ENCODE measurements at regions of chr2 and their contacts with region 1.

Region 1: DNA sequence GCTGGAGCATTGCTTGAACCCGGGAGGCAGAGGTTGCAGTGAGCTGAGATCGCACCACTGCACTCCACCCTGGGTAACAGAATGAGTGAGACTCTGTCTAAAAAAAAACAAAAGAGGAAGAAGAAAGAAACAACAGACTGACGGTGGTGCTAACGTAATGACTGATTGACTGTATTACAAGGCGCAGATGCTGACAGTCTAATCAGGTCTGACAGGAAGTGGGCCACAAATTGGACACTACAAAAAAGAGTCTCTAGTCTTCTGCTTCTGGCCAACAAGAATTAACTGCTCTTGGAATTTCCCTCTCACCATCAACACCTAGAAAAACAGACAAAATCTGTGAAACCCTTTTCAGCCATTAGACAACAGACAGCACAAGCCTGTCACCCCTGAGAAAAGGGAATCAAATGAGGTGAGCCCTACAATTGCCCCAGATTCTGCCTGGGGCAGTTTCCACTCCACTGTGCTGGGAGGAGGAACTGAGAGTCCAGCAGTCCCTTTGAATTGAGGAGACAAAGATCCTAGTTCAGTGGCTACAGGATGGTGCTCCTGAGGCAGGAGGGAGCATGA is 43.3 kb downstream of the SNED1 start:
- DNase-seq: no peak
- ATAC-seq: peak; percentile 75
- H3K4me3 Mint-ChIP-seq: peak overlapping the region; percentile 74
- H3K27ac Mint-ChIP-seq: peak overlapping the region; percentile 96
- H3K4me1 Mint-ChIP-seq: peaks cover 70% of the 10 kb centered on the region
- H3K27me3 Mint-ChIP-seq: no peaks in the 10 kb centered on the region
- CTCF ChIP-seq: no peak

Region 2: DNA sequence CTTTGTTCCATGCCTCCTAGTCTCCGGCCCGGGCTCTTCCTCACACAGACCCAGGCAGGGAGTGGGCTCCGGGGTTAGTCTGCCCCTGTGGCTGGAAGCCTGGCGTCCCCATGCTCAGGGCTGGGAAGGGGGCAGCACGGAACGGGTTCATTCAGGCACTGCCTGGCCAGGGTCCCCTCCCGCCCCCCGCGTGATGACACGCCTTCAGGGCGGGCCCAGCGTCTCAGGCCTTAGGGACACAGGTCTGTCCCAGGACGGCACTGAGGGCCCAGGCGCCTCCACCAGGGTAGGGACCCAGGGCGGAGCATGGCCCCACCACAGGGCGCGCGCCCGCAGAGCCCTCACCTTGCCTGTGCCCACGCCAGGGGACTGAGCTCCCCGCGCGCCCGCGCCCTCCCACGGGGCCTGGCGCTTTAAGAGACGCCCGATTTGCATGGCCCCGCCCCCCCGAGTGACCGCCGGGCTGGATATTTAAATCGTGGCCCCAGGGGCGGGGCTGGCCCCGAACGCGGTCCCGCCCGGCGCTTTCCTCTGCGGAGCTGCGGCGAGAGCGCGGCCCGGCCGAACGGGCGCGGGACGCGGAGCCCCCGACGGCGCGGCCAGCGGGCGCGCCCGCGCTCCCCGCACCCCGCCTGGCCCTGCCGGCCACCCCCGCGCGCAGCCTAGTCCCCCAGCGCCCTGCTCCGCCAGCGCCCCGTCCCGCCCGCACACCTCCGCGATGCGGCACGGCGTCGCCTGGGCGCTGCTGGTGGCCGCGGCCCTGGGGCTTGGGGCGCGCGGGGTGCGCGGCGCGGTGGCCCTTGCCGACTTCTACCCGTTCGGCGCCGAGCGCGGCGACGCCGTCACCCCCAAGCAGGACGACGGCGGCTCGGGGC is 43.3 kb before region 1 on chr2 and contains the start of gene SNED1:
- CTCF ChIA-PET with region 1: no interaction called
- POLR2A ChIA-PET with region 1: interaction called, 3 read pairs
- intact Hi-C with region 1: loop called (anchors 1 kb)
- DNase-seq: peak; percentile 67
- ATAC-seq: peak; percentile 89
- H3K4me3 Mint-ChIP-seq: peak within 1 kb of the TSS; percentile 2
- H3K27ac Mint-ChIP-seq: no peak within 1 kb of the TSS
- H3K4me1 Mint-ChIP-seq: no peaks in the 10 kb centered on the region
- H3K27me3 Mint-ChIP-seq: peaks cover 23% of the 10 kb centered on the region
- CTCF ChIP-seq: no peak
- total RNA-seq, gene SNED1: 44.7 and 59.8 TPM in 2 replicates

Region 3: GRCh38 chr2:241064008-241064801 is 22.5 kb after region 1 on chr2:
- CTCF ChIA-PET with region 1: no interaction called
- POLR2A ChIA-PET with region 1: interaction called, 4 read pairs
- intact Hi-C with region 1: loop called (anchors 2 kb)
- DNase-seq: peak; percentile 37
- ATAC-seq: peak; percentile 81
- H3K4me3 Mint-ChIP-seq: peak overlapping the region; percentile 55
- H3K27ac Mint-ChIP-seq: no peak overlapping the region
- H3K4me1 Mint-ChIP-seq: peaks cover 2% of the 10 kb centered on the region
- H3K27me3 Mint-ChIP-seq: peaks cover 3% of the 10 kb centered on the region
- CTCF ChIP-seq: no peak

Region 4: GRCh38 chr2:241118737-241119505 is 77.2 kb after region 1 on chr2:
- CTCF ChIA-PET with region 1: no interaction called
- POLR2A ChIA-PET with region 1: no interaction called
- intact Hi-C with region 1: no loop called
- DNase-seq: no peak
- ATAC-seq: no peak
- H3K4me3 Mint-ChIP-seq: no peak overlapping the region
- H3K27ac Mint-ChIP-seq: no peak overlapping the region
- H3K4me1 Mint-ChIP-seq: peaks cover 6% of the 10 kb centered on the region
- H3K27me3 Mint-ChIP-seq: no peaks in the 10 kb centered on the region
- CTCF ChIP-seq: no peak

Measured in activated B cell treated with CpG ODN at 0.5 μM for 24 hours (primary cell).